Heart left ventricle (tissue), 16 donors: ENCODE measurements at regions of chr1 and their contacts with region 1.

Region 1: DNA sequence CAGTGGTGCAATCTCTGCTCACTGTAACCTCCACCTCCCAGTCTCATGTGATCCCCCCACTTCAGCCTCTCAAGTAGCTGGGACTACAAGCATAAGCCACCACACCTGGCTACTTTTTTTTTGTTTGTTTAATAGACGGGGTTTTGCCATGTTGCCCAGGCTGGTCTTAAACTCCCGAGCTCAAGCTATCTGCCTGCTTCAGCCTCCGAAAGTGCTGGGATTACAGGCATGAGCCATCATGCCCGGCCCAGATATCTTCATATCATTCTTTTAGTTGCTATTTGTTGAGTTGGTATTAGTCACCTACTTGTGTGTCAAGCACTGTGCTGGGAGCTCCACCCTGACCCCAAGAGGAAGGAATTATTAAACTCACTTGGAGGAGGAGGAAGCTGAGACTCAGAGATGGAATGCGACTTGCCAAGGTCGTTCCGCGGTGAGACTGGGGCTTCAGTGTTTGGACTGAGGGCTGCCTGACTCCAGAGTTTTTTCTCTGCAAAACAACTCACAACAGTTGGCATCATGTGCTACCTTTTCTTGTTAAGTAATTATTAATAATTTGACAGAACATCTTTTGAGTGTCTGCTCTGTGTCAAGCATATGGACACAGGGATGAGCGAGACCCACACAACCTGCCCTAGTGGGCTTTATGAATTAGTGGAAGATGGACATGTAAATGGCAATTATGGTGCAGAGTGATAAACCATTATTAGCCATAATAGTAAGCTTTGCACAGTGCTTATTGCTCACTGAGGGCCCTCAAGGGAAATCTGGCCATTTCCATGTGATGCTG is 132.0 kb downstream of the FOXD2 start:
- DNase-seq: peak in 2 of 5 donors; percentile 34 to 40
- ATAC-seq: peak; percentile 54 to 88 (median 78)
- H3K4me3 ChIP-seq: no peak overlapping the region
- H3K27ac ChIP-seq: peak overlapping the region in 1 of 12 donors; percentile 2
- H3K4me1 ChIP-seq: peaks cover 0 to 15% (median 5%) of the 10 kb centered on the region in 12 donors
- H3K27me3 ChIP-seq: peaks cover 0 to 9% (median 0%) of the 10 kb centered on the region in 9 donors
- CTCF ChIP-seq: peak in 11 of 12 donors; percentile 26 to 62 (median 42)
- POLR2A ChIP-seq: no peak

Region 2: GRCh38 chr1:47437447-47438164 is 132.3 kb before region 1 on chr1 and contains the start of gene FOXD2:
- intact Hi-C with region 1: loop called in 1 of 10 experiments (anchors 5 kb)
- DNase-seq: peak; percentile 83 to 93 (median 85)
- ATAC-seq: peak; percentile 92 to 95 (median 95)
- H3K4me3 ChIP-seq: peak within 1 kb of the TSS; percentile 36 to 81 (median 70)
- H3K27ac ChIP-seq: peak within 1 kb of the TSS in 11 of 12 donors; percentile 49 to 90 (median 69)
- H3K4me1 ChIP-seq: peaks cover 4 to 56% (median 25%) of the 10 kb centered on the region in 12 donors
- H3K27me3 ChIP-seq: peaks cover 43 to 98% (median 84%) of the 10 kb centered on the region in 9 donors
- CTCF ChIP-seq: peak; percentile 92 to 100 (median 98)
- POLR2A ChIP-seq: peak in 1 of 2 donors; percentile 62
- total RNA-seq, gene FOXD2: 0.05 to 0.14 (median 0.12) TPM in 5 of 9 donors, not detected in the others

Region 3: DNA sequence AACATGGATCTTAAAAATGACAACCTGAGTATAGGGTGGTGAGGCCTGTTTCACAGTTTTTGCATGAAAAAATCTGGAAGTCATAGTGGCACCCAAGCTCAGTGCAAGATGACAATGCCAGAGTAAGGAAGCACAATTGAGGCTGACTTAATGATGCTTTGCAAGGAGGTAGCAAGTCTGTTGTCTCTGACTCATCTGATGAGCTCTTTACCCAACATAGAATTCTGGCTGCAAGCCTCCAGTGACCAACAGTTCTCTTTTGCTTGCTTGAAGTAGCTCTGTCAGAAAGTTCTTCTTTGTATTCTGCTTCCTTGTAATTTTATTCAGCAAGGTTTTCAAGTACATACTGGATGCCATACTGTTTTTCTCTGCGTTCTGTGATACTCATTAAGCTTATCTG is 15.0 kb before region 1 on chr1:
- intact Hi-C with region 1: no loop called
- DNase-seq: no peak
- ATAC-seq: no peak
- H3K4me3 ChIP-seq: no peak overlapping the region
- H3K27ac ChIP-seq: no peak overlapping the region
- H3K4me1 ChIP-seq: no peaks in the 10 kb centered on the region
- H3K27me3 ChIP-seq: peaks cover 0 to 23% (median 6%) of the 10 kb centered on the region in 9 donors
- CTCF ChIP-seq: no peak
- POLR2A ChIP-seq: no peak